Activated CD4-positive, alpha-beta T cell treated with anti-CD3 and anti-CD28 coated beads for 36 hours (primary cell): ENCODE measurements at regions of chr12 and their contacts with region 1.

Region 1: GRCh38 chr12:93677195-93678064 is at the start of gene CRADD:
- DNase-seq: peak; percentile 90
- ATAC-seq: peak; percentile 97
- H3K4me3 Mint-ChIP-seq: peak within 1 kb of the TSS; percentile 97
- H3K27ac Mint-ChIP-seq: peak within 1 kb of the TSS; percentile 100
- H3K4me1 Mint-ChIP-seq: peaks cover 29% of the 10 kb centered on the region
- H3K27me3 Mint-ChIP-seq: peaks cover 8% of the 10 kb centered on the region
- total RNA-seq, gene CRADD: 5.7 to 7.8 TPM

Region 2: GRCh38 chr12:93467351-93468007 is 210.0 kb before region 1 on chr12 and contains the start of gene MRPL42:
- CTCF ChIA-PET with region 1: no interaction called
- POLR2A ChIA-PET with region 1: no interaction called
- intact Hi-C with region 1: loop called in 1 of 2 experiments (anchors 1 kb)
- DNase-seq: peak; percentile 95
- ATAC-seq: peak; percentile 91
- H3K4me3 Mint-ChIP-seq: peak within 1 kb of the TSS; percentile 95
- H3K27ac Mint-ChIP-seq: peak within 1 kb of the TSS; percentile 93
- H3K4me1 Mint-ChIP-seq: peaks cover 29% of the 10 kb centered on the region
- H3K27me3 Mint-ChIP-seq: no peaks in the 10 kb centered on the region
- total RNA-seq, gene MRPL42: 78.7 to 98.3 TPM

Region 3: DNA sequence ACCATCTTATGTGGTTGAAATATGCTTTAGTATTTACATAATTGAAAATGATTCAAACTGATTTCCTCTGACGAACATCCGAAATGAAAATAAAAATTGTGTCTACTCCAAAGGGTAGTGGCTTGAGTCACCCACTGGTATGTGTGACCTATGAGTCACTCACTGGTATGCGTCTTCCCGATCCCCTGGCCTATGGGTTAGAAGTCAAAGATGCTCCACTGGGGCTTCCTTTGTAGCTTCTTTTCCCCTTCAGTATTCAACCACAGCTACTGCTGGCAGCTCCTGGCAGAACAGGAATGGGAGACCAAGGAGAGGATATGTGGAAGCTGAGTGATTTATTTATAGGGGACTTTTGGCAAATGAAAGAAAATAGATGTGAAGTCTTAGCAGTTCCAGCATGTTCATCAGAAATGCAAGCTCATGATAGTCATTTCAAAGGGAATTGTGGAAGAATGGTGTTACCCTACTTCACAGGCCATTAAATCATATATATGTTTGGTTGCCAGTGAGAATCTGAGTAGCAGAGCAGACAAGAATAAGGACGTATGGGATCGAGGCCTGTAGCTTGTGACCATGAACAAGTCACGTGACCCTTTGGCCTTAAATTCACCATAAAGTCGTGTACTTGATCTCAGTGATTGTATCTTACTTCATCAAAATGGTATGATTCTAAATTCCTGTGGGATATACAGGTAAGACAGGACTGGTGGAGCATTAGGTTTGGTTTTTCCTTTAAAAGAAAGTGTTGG is 108.0 kb after region 1 on chr12:
- CTCF ChIA-PET with region 1: no interaction called
- POLR2A ChIA-PET with region 1: no interaction called
- intact Hi-C with region 1: loop called (anchors 1 to 5 kb)
- DNase-seq: peak; percentile 72
- ATAC-seq: peak; percentile 76
- H3K4me3 Mint-ChIP-seq: peak overlapping the region; percentile 20
- H3K27ac Mint-ChIP-seq: peak overlapping the region; percentile 87
- H3K4me1 Mint-ChIP-seq: peaks cover 70% of the 10 kb centered on the region
- H3K27me3 Mint-ChIP-seq: no peaks in the 10 kb centered on the region

Region 4: GRCh38 chr12:94262228-94263010 is 585.0 kb after region 1 on chr12:
- CTCF ChIA-PET with region 1: no interaction called
- POLR2A ChIA-PET with region 1: no interaction called
- intact Hi-C with region 1: loop called in 1 of 2 experiments (anchors 5 kb)
- DNase-seq: peak; percentile 87
- ATAC-seq: peak; percentile 83
- H3K4me3 Mint-ChIP-seq: peak overlapping the region; percentile 81
- H3K27ac Mint-ChIP-seq: peak overlapping the region; percentile 99
- H3K4me1 Mint-ChIP-seq: peaks cover 44% of the 10 kb centered on the region
- H3K27me3 Mint-ChIP-seq: no peaks in the 10 kb centered on the region

Region 5: GRCh38 chr12:95072900-95073697 is 1395.7 kb after region 1 on chr12 and contains the start of gene NR2C1:
- CTCF ChIA-PET with region 1: no interaction called
- POLR2A ChIA-PET with region 1: no interaction called
- intact Hi-C with region 1: loop called in 1 of 2 experiments (anchors 2 kb)
- DNase-seq: peak; percentile 95
- ATAC-seq: peak; percentile 99
- H3K4me3 Mint-ChIP-seq: peak within 1 kb of the TSS; percentile 84
- H3K27ac Mint-ChIP-seq: peak within 1 kb of the TSS; percentile 82
- H3K4me1 Mint-ChIP-seq: peaks cover 12% of the 10 kb centered on the region
- H3K27me3 Mint-ChIP-seq: no peaks in the 10 kb centered on the region
- total RNA-seq, gene NR2C1: 27.6 to 39.3 TPM